Posterior vena cava (tissue), 2 donors: ENCODE measurements at regions of chr2 and their contacts with region 1.

Region 1: DNA sequence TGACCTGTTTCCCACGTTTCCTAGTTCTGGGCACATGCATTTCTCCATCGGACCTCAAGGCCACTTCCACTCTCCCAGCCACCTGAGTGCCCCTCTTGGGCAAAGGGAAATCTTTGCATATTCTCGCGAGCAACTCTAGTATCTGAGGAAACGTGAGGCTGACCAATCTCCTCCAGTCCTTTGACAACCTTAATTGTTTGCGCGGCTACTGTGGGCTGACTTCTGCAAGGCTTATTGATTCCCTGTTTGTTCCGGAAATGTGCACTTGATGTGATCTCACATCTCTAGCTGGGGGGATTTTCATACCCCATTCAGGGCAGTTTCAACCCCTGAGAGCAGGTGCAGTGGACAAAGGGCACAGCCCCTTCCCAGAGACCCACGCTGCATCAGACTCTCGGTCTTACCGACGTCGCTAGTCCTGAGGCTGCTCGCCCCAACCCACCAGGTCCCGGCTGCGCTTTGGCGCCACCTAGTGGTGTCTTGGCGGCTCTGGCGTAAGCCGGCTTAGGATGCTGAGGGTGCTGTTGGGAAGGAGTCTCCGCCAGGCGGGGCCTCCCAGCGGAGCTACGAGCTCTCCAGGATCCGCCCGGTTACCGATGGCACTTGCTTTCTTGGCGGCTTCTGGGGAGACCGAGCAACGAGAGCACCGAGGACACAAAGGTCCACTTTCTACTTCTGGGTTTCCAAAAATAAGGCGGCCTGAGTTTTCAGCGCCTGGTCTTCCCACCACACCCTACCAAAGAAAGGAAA is 24.8 kb upstream of the SPR start:
- DNase-seq: peak; percentile 97

Region 2: GRCh38 chr2:72770879-72771461 is 91.4 kb before region 1 on chr2:
- intact Hi-C with region 1: loop called in 1 of 2 experiments (anchors 2 kb)
- DNase-seq: no peak

Region 3: GRCh38 chr2:72915907-72916742 is 53.7 kb after region 1 on chr2:
- intact Hi-C with region 1: no loop called
- DNase-seq: no peak

Region 4: DNA sequence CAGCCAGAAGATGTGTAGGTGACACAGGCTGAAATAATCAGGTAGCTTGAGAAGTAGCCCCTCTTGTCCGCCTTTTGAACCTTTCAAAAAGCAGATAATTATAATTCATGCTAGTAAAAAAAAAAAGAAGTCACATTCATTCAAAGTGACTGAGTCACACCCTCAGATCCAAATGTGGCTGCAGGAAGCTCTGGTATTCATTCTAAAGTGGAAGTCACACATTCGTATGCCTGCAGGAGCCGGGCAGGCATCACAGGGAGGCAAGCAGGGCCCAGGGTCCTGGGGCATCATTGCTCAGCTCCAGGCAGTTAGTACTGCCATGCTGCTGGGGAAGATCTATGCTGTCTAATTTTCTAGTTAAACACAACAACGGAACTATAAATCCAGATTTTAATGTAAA is 272.1 kb after region 1 on chr2:
- intact Hi-C with region 1: no loop called
- DNase-seq: no peak